B cell (primary cell): ENCODE measurements at regions of chr10 and their contacts with region 1.

Region 1: GRCh38 chr10:97736902-97737769 is at the start of gene ZFYVE27:
- DNase-seq: peak; percentile 98
- ATAC-seq: peak; percentile 92
- H3K4me3 ChIP-seq: peak within 1 kb of the TSS; percentile 46 to 97 (median 77)
- H3K4me3 Mint-ChIP-seq: peak within 1 kb of the TSS; percentile 100
- H3K27ac ChIP-seq: peak within 1 kb of the TSS; percentile 92 to 97
- H3K27ac Mint-ChIP-seq: peak within 1 kb of the TSS; percentile 100
- H3K4me1 ChIP-seq: peaks cover 25 to 39% of the 10 kb centered on the region in 2 donors
- H3K4me1 Mint-ChIP-seq: peaks cover 55% of the 10 kb centered on the region
- H3K27me3 ChIP-seq: no peaks in the 10 kb centered on the region
- H3K27me3 Mint-ChIP-seq: no peaks in the 10 kb centered on the region
- CTCF ChIP-seq: no peak
- total RNA-seq, gene ZFYVE27: 79.0 and 79.7 TPM in 2 replicates

Region 2: GRCh38 chr10:96626795-96627194 is 1110.3 kb before region 1 on chr10:
- CTCF ChIA-PET with region 1: no interaction called
- POLR2A ChIA-PET with region 1: no interaction called
- intact Hi-C with region 1: no loop called
- DNase-seq: peak; percentile 42
- ATAC-seq: no peak
- H3K4me3 ChIP-seq: no peak overlapping the region
- H3K4me3 Mint-ChIP-seq: no peak overlapping the region
- H3K27ac ChIP-seq: peak overlapping the region in 1 of 2 donors; percentile 36
- H3K27ac Mint-ChIP-seq: peak overlapping the region; percentile 37
- H3K4me1 ChIP-seq: no peaks in the 10 kb centered on the region
- H3K4me1 Mint-ChIP-seq: peaks cover under 1% of the 10 kb centered on the region
- H3K27me3 ChIP-seq: no peaks in the 10 kb centered on the region
- H3K27me3 Mint-ChIP-seq: no peaks in the 10 kb centered on the region
- CTCF ChIP-seq: no peak

Region 3: DNA sequence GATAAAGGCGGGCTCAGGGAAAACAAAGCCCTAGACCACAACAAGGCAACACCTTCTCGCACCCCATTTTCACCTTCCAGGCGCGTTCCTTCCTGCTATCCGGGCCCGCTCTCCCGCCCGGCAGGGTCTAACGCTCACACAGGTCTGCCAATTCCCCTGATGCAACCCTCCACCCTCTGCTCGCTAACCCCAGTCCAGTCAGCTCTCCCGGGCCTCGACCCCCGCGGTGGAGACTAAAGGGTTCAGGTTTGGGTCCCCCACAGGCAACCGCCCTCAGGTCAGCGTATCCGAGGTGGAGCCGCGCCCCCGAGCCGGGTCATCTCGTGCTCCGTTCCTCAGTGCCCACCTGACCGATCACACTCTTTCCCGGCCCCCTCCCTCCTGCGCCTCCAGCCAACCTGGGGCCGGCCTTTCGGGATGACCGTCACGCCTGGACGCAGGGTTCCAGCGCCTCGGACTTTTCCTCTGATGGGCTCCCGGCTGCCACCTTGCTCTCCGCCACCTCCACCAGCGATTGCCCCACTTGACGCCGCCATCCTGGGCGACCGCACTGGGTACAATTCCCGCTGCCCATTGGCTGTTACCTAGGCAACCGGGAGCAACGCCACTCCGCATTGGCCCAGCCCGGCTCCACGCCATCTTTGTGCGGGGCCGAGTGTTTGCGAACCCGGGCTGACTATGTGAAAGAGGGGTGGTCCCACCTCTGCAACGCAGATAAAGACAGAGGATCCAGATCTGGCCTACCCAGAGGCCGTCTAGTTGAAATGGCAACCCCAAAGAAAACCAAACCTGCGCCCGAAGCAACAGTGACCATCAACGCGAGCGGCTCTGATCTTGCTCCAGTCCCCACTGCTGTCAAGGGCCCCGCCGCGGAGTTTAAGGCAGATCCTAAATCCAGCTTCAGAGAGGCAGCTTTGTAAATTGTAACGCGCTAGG is 103.9 kb before region 1 on chr10 and contains the start of gene MORN4:
- CTCF ChIA-PET with region 1: no interaction called
- POLR2A ChIA-PET with region 1: no interaction called
- intact Hi-C with region 1: loop called (anchors 2 kb)
- DNase-seq: peak; percentile 93
- ATAC-seq: peak; percentile 99
- H3K4me3 ChIP-seq: peak within 1 kb of the TSS; percentile 34 to 87 (median 63)
- H3K4me3 Mint-ChIP-seq: peak within 1 kb of the TSS; percentile 94
- H3K27ac ChIP-seq: peak within 1 kb of the TSS in 1 of 2 donors; percentile 11
- H3K27ac Mint-ChIP-seq: peak within 1 kb of the TSS; percentile 76
- H3K4me1 ChIP-seq: peaks cover 0 to 11% of the 10 kb centered on the region in 2 donors
- H3K4me1 Mint-ChIP-seq: peaks cover 13% of the 10 kb centered on the region
- H3K27me3 ChIP-seq: peaks cover 0 to 6% (median 0%) of the 10 kb centered on the region in 4 experiments
- H3K27me3 Mint-ChIP-seq: no peaks in the 10 kb centered on the region
- CTCF ChIP-seq: no peak
- total RNA-seq, gene MORN4: 2.8 TPM in 2 replicates

Region 4: GRCh38 chr10:97640174-97640867 is 96.8 kb before region 1 on chr10 and contains the start of gene PI4K2A:
- CTCF ChIA-PET with region 1: no interaction called
- POLR2A ChIA-PET with region 1: interaction called, 7 read pairs
- intact Hi-C with region 1: loop called (anchors 1 kb)
- DNase-seq: peak; percentile 99
- ATAC-seq: peak; percentile 96
- H3K4me3 ChIP-seq: peak within 1 kb of the TSS; percentile 43 to 84 (median 77)
- H3K4me3 Mint-ChIP-seq: peak within 1 kb of the TSS; percentile 99
- H3K27ac ChIP-seq: peak within 1 kb of the TSS; percentile 70 to 86
- H3K27ac Mint-ChIP-seq: peak within 1 kb of the TSS; percentile 97
- H3K4me1 ChIP-seq: peaks cover 8 to 18% of the 10 kb centered on the region in 2 donors
- H3K4me1 Mint-ChIP-seq: peaks cover 22% of the 10 kb centered on the region
- H3K27me3 ChIP-seq: no peaks in the 10 kb centered on the region
- H3K27me3 Mint-ChIP-seq: no peaks in the 10 kb centered on the region
- CTCF ChIP-seq: no peak
- total RNA-seq, gene PI4K2A: 17.7 and 18.4 TPM in 2 replicates

Region 5: DNA sequence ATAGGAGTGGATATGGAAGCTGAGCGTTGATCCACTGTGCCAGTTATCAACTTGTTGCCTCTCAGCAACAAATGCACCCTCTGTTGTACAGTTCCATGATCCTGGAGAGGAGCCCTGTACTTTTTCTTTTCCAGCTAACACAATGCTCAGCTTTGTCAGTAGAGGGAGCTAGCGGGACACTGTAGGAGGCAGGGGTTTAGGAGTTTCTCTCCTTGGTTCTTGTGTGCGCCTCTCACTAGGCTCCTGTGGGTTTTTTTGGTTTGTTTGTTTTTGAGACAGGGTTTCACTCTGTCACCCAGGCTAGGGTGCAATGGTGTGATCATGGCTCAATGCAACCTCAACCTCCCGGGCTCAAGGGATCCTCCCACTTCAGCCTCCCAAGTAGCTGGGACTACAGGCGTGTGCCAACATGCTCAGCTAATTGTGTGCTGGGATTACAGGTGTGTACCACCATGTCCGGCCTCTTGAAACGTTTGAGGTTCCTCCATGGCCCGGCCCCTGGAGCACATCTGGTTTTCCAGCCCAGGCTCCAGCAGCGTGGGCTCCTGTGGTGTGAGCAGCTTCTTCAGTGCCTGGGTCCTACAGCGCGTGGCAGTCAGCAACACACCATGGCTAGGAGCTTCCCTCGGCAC is 35.6 kb before region 1 on chr10:
- CTCF ChIA-PET with region 1: interaction called, 117 read pairs
- POLR2A ChIA-PET with region 1: no interaction called
- intact Hi-C with region 1: no loop called
- DNase-seq: peak; percentile 66
- ATAC-seq: peak; percentile 75
- H3K4me3 ChIP-seq: no peak overlapping the region
- H3K4me3 Mint-ChIP-seq: no peak overlapping the region
- H3K27ac ChIP-seq: no peak overlapping the region
- H3K27ac Mint-ChIP-seq: no peak overlapping the region
- H3K4me1 ChIP-seq: no peaks in the 10 kb centered on the region
- H3K4me1 Mint-ChIP-seq: no peaks in the 10 kb centered on the region
- H3K27me3 ChIP-seq: peaks cover 0 to 9% (median 2%) of the 10 kb centered on the region in 4 experiments
- H3K27me3 Mint-ChIP-seq: peaks cover 11% of the 10 kb centered on the region
- CTCF ChIP-seq: peak; percentile 78

Region 6: DNA sequence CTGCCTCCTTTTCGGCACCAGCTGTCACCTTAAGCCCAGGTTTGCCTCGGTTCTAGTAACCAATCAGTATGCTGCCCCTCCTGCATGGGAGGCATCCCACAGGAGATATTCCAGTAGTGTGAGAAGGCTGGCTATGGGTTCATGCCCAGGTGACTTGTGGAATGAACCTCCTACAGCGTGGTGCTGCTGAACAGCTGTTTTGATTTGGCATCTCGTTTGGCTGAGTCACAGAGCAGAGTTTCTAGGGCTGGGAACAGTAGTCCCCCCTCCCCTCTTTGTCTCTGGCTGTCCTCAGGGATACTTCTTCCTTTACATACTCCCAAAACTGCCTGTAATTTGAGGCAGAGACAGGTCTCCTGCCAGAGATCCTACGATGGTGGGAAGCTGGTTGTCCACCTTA is 413.4 kb after region 1 on chr10:
- CTCF ChIA-PET with region 1: no interaction called
- POLR2A ChIA-PET with region 1: no interaction called
- intact Hi-C with region 1: no loop called
- DNase-seq: no peak
- ATAC-seq: no peak
- H3K4me3 ChIP-seq: no peak overlapping the region
- H3K4me3 Mint-ChIP-seq: no peak overlapping the region
- H3K27ac ChIP-seq: no peak overlapping the region
- H3K27ac Mint-ChIP-seq: no peak overlapping the region
- H3K4me1 ChIP-seq: no peaks in the 10 kb centered on the region
- H3K4me1 Mint-ChIP-seq: peaks cover 8% of the 10 kb centered on the region
- H3K27me3 ChIP-seq: no peaks in the 10 kb centered on the region
- H3K27me3 Mint-ChIP-seq: no peaks in the 10 kb centered on the region
- CTCF ChIP-seq: no peak